ENCODE measurements at regions of chr16 and their contacts with region 1.

Region 1: DNA sequence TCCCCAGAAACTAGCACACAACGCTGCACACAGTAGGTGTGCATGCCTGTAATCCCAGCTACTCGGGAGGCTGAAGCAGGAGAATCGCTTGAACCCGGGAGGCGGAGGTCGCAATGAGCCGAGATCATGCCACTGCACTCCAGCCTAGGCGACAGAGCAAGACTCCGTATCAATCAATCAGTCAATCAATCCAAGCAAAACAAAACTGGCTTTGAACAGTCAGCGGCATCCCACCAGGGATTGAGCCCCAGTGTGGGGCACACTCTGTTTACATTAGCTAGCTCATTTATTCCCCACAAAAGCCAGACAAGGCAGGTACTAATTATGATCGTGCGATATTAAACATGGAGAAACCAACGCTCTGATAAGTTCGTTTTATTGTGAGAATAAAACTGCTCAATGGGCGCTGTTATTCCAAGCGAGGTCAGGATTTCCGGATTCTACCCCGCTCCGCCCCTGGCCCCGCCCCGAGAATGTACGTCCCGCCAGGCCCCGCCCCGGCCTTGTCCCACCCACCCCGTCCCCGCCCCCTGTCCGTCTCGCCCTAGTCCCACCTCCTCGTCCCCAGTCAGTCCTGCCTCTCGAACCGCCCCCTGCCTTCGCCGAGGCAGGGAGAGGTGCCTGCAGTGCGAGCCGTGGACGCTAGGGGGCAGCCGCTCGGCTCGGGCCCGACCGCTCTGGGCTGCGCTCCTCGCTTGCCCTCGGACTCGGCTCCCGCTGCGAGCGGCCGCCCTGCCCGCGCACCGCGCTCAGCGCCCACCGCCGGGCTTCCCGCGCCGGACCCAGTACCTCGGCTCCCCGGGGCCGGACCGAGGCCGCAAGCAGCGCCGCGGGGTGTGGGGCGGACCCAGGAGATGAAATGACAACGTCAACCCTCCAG is at the start of gene VPS4A:
- DNase-seq: peak; percentile 98
- ATAC-seq: peak; percentile 97
- H3K4me3 Mint-ChIP-seq: peak within 1 kb of the TSS; percentile 100
- H3K27ac Mint-ChIP-seq: peak within 1 kb of the TSS; percentile 97
- H3K4me1 Mint-ChIP-seq: peaks cover 26% of the 10 kb centered on the region
- H3K27me3 Mint-ChIP-seq: no peaks in the 10 kb centered on the region
- total RNA-seq, gene VPS4A: 28.4 to 31.9 TPM

Region 2: DNA sequence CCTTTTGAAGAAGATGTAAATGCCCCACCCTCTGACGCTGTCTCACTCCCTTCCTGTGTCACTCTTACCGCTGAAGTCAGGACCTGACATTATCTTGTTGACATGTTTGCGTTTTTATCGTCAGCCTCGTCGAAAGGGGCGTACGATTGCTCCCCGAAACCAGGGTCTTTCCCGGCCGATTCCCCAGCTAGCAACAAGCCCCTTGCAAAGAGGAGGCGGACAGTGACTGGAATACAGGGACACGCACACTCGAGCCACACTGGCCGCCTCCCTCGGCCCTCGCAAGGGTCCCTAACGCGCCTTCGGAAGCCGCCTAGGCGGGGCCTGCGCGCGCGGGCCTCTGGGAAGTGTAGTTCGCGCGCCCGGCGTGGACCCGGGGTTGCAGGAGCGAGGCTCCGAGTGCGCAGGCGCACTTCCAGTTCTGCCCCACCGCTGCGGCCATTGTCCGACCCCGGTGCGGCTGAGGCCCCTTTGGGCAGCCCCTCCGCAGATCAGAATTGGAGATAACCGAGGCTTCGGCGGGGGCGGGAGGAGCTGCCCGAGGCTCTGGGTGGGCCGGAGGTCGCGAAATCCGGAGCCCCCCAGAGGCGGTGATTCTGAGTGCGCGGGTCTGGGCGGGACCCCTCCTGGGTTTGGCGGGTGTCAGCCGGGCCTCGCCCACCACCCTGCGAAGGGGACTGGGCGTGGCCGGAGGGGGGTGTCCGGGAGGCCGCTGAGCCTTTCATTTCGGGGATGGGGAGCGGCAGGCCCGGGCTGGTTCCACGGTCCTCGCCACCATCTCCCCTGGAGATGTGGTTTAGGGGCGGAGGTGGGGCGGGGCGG is 771.8 kb before region 1 on chr16 and contains the start of gene ZFP90:
- CTCF ChIA-PET with region 1: no interaction called
- POLR2A ChIA-PET with region 1: no interaction called
- intact Hi-C with region 1: loop called in 1 of 2 experiments (anchors 1 kb)
- DNase-seq: peak; percentile 93
- ATAC-seq: peak; percentile 96
- H3K4me3 Mint-ChIP-seq: peak within 1 kb of the TSS; percentile 89
- H3K27ac Mint-ChIP-seq: peak within 1 kb of the TSS; percentile 98
- H3K4me1 Mint-ChIP-seq: peaks cover 16% of the 10 kb centered on the region
- H3K27me3 Mint-ChIP-seq: no peaks in the 10 kb centered on the region
- total RNA-seq, gene ZFP90: 31.4 to 31.6 TPM

Region 3: GRCh38 chr16:69166221-69166833 is 144.6 kb before region 1 on chr16:
- CTCF ChIA-PET with region 1: interaction called, 3 read pairs
- POLR2A ChIA-PET with region 1: no interaction called
- intact Hi-C with region 1: loop called in 1 of 2 experiments (anchors 1 kb)
- DNase-seq: peak; percentile 91
- ATAC-seq: peak; percentile 92
- H3K4me3 Mint-ChIP-seq: peak overlapping the region; percentile 32
- H3K27ac Mint-ChIP-seq: peak overlapping the region; percentile 87
- H3K4me1 Mint-ChIP-seq: peaks cover 52% of the 10 kb centered on the region
- H3K27me3 Mint-ChIP-seq: no peaks in the 10 kb centered on the region

Region 4: DNA sequence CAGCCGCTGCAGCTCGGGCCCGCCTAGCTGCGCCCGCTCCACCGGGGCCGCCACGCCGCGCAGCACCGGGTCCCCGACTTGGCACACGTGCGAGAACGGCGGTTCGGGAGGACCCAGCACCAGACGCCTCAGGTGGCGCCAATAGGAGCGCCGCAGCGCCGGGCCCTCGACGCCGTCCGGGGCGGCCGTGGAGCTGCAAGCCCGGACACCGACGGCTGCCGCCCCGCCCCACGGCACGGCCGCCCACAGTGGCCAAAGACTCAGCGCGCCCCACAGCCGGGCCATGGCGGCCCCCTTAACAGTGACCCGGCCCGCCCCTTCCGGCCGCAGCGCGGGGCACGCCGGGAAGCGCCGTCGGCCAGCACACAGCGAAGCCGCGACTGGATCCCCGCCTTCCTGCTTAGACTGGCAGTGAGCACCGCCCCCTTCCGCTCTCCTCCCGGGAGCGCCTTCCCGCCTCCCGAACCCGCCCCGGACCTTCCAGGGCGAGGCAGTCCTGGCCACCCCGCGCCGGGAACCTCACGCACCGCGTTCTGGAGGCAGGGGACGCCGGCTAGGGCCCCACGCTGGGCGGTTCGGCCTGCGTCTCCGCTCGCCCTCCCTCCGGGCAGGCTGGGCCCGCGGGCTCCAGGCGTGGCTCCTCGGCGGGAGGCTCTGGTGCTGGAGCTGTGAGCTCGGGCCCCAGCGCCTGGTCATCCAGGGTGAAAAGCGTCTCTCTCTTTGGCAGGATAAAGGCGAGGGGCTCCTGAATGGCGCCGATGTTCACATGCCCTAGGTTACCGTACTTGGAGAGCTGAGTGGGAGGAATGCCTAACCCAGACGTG is 19.6 kb after region 1 on chr16 and contains the start of gene PDF:
- CTCF ChIA-PET with region 1: interaction called, 21 read pairs
- POLR2A ChIA-PET with region 1: interaction called, 3 read pairs
- intact Hi-C with region 1: loop called (anchors 1 kb)
- DNase-seq: peak; percentile 90
- ATAC-seq: peak; percentile 94
- H3K4me3 Mint-ChIP-seq: peak within 1 kb of the TSS; percentile 83
- H3K27ac Mint-ChIP-seq: peak within 1 kb of the TSS; percentile 84
- H3K4me1 Mint-ChIP-seq: peaks cover 45% of the 10 kb centered on the region
- H3K27me3 Mint-ChIP-seq: no peaks in the 10 kb centered on the region
- total RNA-seq, gene PDF: 10.1 to 19.9 TPM

Region 5: DNA sequence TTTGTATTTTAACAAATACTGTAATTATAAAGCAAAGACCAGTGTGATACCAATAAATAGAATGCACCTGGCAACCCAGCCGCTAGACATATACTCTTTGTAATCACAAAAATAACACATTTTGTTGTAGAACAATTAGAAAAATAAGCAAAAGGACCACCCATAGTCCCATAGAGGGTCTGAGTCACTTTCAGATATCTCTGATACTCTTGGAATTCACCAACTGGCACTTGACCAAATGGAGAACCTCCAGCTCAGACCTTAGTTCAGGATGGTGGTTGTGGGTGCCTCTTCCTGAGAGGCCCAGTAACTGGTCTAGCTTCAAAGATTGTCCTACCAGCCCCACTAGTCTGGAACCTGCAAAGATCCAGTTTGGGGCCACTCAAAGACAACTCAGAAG is 75.7 kb after region 1 on chr16:
- CTCF ChIA-PET with region 1: no interaction called
- POLR2A ChIA-PET with region 1: no interaction called
- intact Hi-C with region 1: loop called in 1 of 2 experiments (anchors 1 kb)
- DNase-seq: no peak
- ATAC-seq: no peak
- H3K4me3 Mint-ChIP-seq: peak overlapping the region; percentile 100
- H3K27ac Mint-ChIP-seq: peak overlapping the region; percentile 55
- H3K4me1 Mint-ChIP-seq: peaks cover 29% of the 10 kb centered on the region
- H3K27me3 Mint-ChIP-seq: no peaks in the 10 kb centered on the region

Region 6: GRCh38 chr16:69754469-69755310 is 443.8 kb after region 1 on chr16 and contains the start of gene NOB1:
- CTCF ChIA-PET with region 1: no interaction called
- POLR2A ChIA-PET with region 1: no interaction called
- intact Hi-C with region 1: loop called in 1 of 2 experiments (anchors 2 kb)
- DNase-seq: peak; percentile 99
- ATAC-seq: peak; percentile 98
- H3K4me3 Mint-ChIP-seq: peak within 1 kb of the TSS; percentile 96
- H3K27ac Mint-ChIP-seq: peak within 1 kb of the TSS; percentile 98
- H3K4me1 Mint-ChIP-seq: peaks cover 21% of the 10 kb centered on the region
- H3K27me3 Mint-ChIP-seq: no peaks in the 10 kb centered on the region
- total RNA-seq, gene NOB1: 109 to 112 TPM